ENCODE measurements at regions of chr15 and their contacts with region 1.

Region 1: DNA sequence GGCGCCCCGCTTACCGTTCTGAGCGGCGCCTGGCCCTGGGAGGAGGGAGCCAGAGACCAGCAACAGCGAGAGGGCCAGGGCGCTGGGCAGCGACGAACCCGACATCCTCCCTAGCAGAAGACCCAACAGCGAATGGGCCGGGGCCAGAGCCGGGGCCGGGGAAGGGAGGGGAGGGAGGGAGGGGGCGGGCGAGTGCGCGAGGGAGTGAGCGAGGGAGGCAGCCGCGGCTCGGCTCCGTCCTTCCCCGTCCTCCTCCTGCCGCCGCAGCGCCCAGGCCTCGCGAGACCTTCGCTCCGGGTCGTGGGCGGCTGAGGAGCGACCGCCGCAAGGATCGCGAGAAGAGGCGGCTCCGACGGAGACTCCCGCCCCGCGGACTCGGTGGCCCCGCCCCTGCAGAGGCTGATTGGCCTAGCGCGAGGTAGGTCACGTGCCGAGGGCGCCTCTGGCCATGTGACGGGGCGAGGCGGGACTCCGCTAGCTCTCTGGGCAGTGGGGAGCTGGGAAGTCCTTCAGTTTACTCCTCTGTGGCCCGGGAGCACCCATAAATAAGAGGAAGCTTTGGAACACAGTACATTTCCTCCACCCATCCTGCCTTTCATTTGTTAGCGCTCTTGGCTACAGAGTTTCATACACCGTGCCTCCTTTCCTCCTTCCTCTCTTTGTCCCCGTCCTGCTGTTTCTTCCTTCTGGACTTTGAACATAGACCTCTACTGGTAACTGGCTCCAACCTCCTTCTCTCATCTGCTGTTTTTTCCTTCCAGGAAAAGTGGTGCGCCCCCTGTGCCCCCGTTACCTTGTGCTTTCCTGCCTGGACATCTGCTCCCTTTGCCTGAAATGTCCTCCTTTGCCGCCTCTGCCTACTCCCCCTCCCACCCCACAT is at the start of gene NPTN:
- DNase-seq: peak; percentile 97 to 98 (median 98)
- H3K4me3 ChIP-seq: peak within 1 kb of the TSS; percentile 75
- H3K4me3 Mint-ChIP-seq: peak within 1 kb of the TSS; percentile 88 to 95 (median 91)
- H3K27ac ChIP-seq: peak within 1 kb of the TSS; percentile 63
- H3K27ac Mint-ChIP-seq: peak within 1 kb of the TSS; percentile 17 to 94 (median 88)
- H3K4me1 ChIP-seq: peaks cover 45% of the 10 kb centered on the region
- H3K4me1 Mint-ChIP-seq: peaks cover 42 to 54% (median 53%) of the 10 kb centered on the region in 3 donors
- H3K27me3 ChIP-seq: no peaks in the 10 kb centered on the region
- H3K27me3 Mint-ChIP-seq: peaks cover 12 to 16% of the 10 kb centered on the region in 2 donors
- total RNA-seq, gene NPTN: 55.8 to 58.5 TPM

Region 2: DNA sequence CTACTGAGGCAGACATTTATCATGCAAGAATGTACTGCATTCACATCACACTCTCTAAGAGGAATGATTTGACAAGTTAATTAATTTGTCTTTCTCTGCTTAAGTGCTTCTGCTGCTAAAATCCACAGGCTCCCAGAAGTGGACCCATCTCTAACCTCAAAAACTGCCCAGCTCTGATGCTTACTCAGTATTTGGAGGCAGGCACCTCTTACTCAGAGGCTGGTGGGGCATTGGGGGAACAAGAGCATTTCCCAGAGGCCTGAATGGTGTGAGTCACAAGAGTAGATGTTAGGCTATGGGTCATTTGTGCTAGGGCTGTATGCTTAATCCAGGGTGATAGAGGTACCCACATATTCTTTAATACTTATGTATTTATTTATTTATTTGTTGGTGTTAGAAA is 230.2 kb before region 1 on chr15:
- CTCF ChIA-PET with region 1: no interaction called
- POLR2A ChIA-PET with region 1: no interaction called
- DNase-seq: no peak
- H3K4me3 ChIP-seq: no peak overlapping the region
- H3K4me3 Mint-ChIP-seq: no peak overlapping the region
- H3K27ac ChIP-seq: no peak overlapping the region
- H3K27ac Mint-ChIP-seq: no peak overlapping the region
- H3K4me1 ChIP-seq: no peaks in the 10 kb centered on the region
- H3K4me1 Mint-ChIP-seq: no peaks in the 10 kb centered on the region
- H3K27me3 ChIP-seq: no peaks in the 10 kb centered on the region
- H3K27me3 Mint-ChIP-seq: peaks cover 0 to 9% of the 10 kb centered on the region in 2 donors

Region 3: GRCh38 chr15:73560501-73561117 is 72.7 kb before region 1 on chr15:
- CTCF ChIA-PET with region 1: interaction called, 40 read pairs
- POLR2A ChIA-PET with region 1: no interaction called
- DNase-seq: peak in 2 of 5 donors; percentile 16 to 18
- H3K4me3 ChIP-seq: no peak overlapping the region
- H3K4me3 Mint-ChIP-seq: no peak overlapping the region
- H3K27ac ChIP-seq: no peak overlapping the region
- H3K27ac Mint-ChIP-seq: no peak overlapping the region
- H3K4me1 ChIP-seq: no peaks in the 10 kb centered on the region
- H3K4me1 Mint-ChIP-seq: peaks cover 0 to 4% (median 0%) of the 10 kb centered on the region in 3 donors
- H3K27me3 ChIP-seq: no peaks in the 10 kb centered on the region
- H3K27me3 Mint-ChIP-seq: no peaks in the 10 kb centered on the region

Region 4: GRCh38 chr15:73575636-73576247 is 57.6 kb before region 1 on chr15:
- CTCF ChIA-PET with region 1: no interaction called
- POLR2A ChIA-PET with region 1: no interaction called
- DNase-seq: no peak
- H3K4me3 ChIP-seq: no peak overlapping the region
- H3K4me3 Mint-ChIP-seq: no peak overlapping the region
- H3K27ac ChIP-seq: no peak overlapping the region
- H3K27ac Mint-ChIP-seq: peak overlapping the region in 1 of 8 donors; percentile 23
- H3K4me1 ChIP-seq: no peaks in the 10 kb centered on the region
- H3K4me1 Mint-ChIP-seq: no peaks in the 10 kb centered on the region
- H3K27me3 ChIP-seq: no peaks in the 10 kb centered on the region
- H3K27me3 Mint-ChIP-seq: no peaks in the 10 kb centered on the region

Region 5: GRCh38 chr15:73608941-73609340 is 24.4 kb before region 1 on chr15:
- CTCF ChIA-PET with region 1: interaction called, 17 read pairs
- POLR2A ChIA-PET with region 1: interaction called, 4 read pairs
- DNase-seq: no peak
- H3K4me3 ChIP-seq: no peak overlapping the region
- H3K4me3 Mint-ChIP-seq: no peak overlapping the region
- H3K27ac ChIP-seq: no peak overlapping the region
- H3K27ac Mint-ChIP-seq: no peak overlapping the region
- H3K4me1 ChIP-seq: peaks cover 7% of the 10 kb centered on the region
- H3K4me1 Mint-ChIP-seq: peaks cover 46 to 60% (median 58%) of the 10 kb centered on the region in 3 donors
- H3K27me3 ChIP-seq: no peaks in the 10 kb centered on the region
- H3K27me3 Mint-ChIP-seq: no peaks in the 10 kb centered on the region

Region 6: GRCh38 chr15:73617301-73617831 is 16.0 kb before region 1 on chr15:
- CTCF ChIA-PET with region 1: interaction called, 29 read pairs
- POLR2A ChIA-PET with region 1: interaction called, 4 read pairs
- DNase-seq: no peak
- H3K4me3 ChIP-seq: no peak overlapping the region
- H3K4me3 Mint-ChIP-seq: no peak overlapping the region
- H3K27ac ChIP-seq: no peak overlapping the region
- H3K27ac Mint-ChIP-seq: no peak overlapping the region
- H3K4me1 ChIP-seq: no peaks in the 10 kb centered on the region
- H3K4me1 Mint-ChIP-seq: peaks cover 52 to 73% (median 64%) of the 10 kb centered on the region in 3 donors
- H3K27me3 ChIP-seq: no peaks in the 10 kb centered on the region
- H3K27me3 Mint-ChIP-seq: no peaks in the 10 kb centered on the region

Region 7: DNA sequence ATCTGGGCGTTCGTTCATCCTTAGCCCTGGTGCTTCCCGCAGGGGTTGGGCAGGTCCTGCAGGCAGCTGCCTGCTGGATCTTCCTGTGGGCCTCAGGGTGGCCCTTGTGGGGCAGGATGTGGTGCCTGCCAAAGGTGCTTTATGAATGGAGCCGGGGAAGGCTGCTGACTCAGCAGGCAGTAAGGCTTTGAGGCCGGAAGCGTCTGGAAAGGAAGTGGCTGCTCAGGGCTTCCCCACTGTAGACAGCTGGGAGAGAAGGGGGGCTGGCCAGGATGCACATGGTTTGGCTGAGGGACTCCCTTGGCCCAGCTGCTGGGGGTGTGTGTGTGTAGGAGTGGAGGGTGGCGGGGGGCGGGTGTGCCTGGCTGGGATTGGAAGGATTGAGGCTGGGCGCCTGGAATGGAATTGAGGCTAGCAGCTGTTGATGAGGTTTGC is 63.7 kb after region 1 on chr15:
- CTCF ChIA-PET with region 1: interaction called, 25 read pairs
- POLR2A ChIA-PET with region 1: no interaction called
- DNase-seq: peak; percentile 60 to 87 (median 71)
- H3K4me3 ChIP-seq: no peak overlapping the region
- H3K4me3 Mint-ChIP-seq: peak overlapping the region in 6 of 7 donors; percentile 6 to 75 (median 45)
- H3K27ac ChIP-seq: no peak overlapping the region
- H3K27ac Mint-ChIP-seq: peak overlapping the region in 7 of 8 donors; percentile 33 to 89 (median 79)
- H3K4me1 ChIP-seq: peaks cover 16% of the 10 kb centered on the region
- H3K4me1 Mint-ChIP-seq: peaks cover 23 to 28% (median 24%) of the 10 kb centered on the region in 3 donors
- H3K27me3 ChIP-seq: peaks cover 27% of the 10 kb centered on the region
- H3K27me3 Mint-ChIP-seq: peaks cover 28 to 47% of the 10 kb centered on the region in 2 donors

Region 8: DNA sequence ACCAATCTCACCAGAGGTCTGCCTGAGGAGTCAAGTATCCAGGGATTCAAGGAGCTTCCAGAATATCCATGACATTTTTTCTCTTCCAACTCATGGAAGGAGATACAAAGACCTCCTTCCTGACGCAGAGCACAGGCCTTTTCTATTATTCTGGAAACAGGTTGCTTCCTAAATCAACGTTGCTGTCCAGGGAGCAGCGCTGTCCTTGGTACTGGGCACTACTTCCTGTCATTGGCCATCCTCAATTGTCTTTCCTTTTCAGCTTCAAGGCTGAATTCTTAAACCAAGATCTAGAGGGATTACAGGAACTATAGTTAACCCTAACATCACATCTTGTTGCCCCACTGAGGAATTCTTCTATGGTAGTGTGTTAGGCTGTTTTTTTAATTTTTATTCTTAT is 189.6 kb after region 1 on chr15:
- CTCF ChIA-PET with region 1: no interaction called
- POLR2A ChIA-PET with region 1: no interaction called
- DNase-seq: no peak
- H3K4me3 ChIP-seq: no peak overlapping the region
- H3K4me3 Mint-ChIP-seq: no peak overlapping the region
- H3K27ac ChIP-seq: no peak overlapping the region
- H3K27ac Mint-ChIP-seq: peak overlapping the region in 1 of 8 donors; percentile 59
- H3K4me1 ChIP-seq: no peaks in the 10 kb centered on the region
- H3K4me1 Mint-ChIP-seq: no peaks in the 10 kb centered on the region
- H3K27me3 ChIP-seq: no peaks in the 10 kb centered on the region
- H3K27me3 Mint-ChIP-seq: peaks cover 11 to 40% of the 10 kb centered on the region in 2 donors

Measured in CD8-positive, alpha-beta memory T cell (primary cell).